ENCODE measurements at regions of chr13 and their contacts with region 1.

Region 1: GRCh38 chr13:52450012-52450792 is at the start of gene VPS36:
- DNase-seq: peak; percentile 96 to 98
- ATAC-seq: peak; percentile 86 to 97 (median 92)
- H3K4me3 ChIP-seq: peak within 1 kb of the TSS; percentile 62 to 88 (median 80)
- H3K27ac ChIP-seq: peak within 1 kb of the TSS; percentile 89 to 99 (median 97)
- H3K4me1 ChIP-seq: peaks cover 0 to 44% (median 26%) of the 10 kb centered on the region in 9 donors
- H3K27me3 ChIP-seq: no peaks in the 10 kb centered on the region
- CTCF ChIP-seq: peak; percentile 99 to 100 (median 100)
- total RNA-seq, gene VPS36: 25.3 to 36.5 (median 32.7) TPM

Region 2: GRCh38 chr13:51844862-51845573 is 605.2 kb before region 1 on chr13 and contains the start of gene TMEM272:
- intact Hi-C with region 1: no loop called
- DNase-seq: peak; percentile 31 to 61
- ATAC-seq: peak; percentile 54 to 87 (median 82)
- H3K4me3 ChIP-seq: peak within 1 kb of the TSS in 5 of 10 donors; percentile 2 to 29 (median 15)
- H3K27ac ChIP-seq: no peak within 1 kb of the TSS
- H3K4me1 ChIP-seq: peaks cover 0 to 22% (median 6%) of the 10 kb centered on the region in 9 donors
- H3K27me3 ChIP-seq: no peaks in the 10 kb centered on the region
- CTCF ChIP-seq: peak; percentile 70 to 95 (median 90)
- total RNA-seq, gene TMEM272: 0.32 to 2.7 (median 0.77) TPM

Region 3: GRCh38 chr13:52001120-52001731 is 449.0 kb before region 1 on chr13:
- intact Hi-C with region 1: loop called in 1 of 10 experiments (anchors 10 kb)
- DNase-seq: no peak
- ATAC-seq: peak in 5 of 8 donors; percentile 29 to 68 (median 52)
- H3K4me3 ChIP-seq: no peak overlapping the region
- H3K27ac ChIP-seq: no peak overlapping the region
- H3K4me1 ChIP-seq: peaks cover 2 to 18% (median 11%) of the 10 kb centered on the region in 9 donors
- H3K27me3 ChIP-seq: no peaks in the 10 kb centered on the region
- CTCF ChIP-seq: peak; percentile 50 to 80 (median 75)

Region 4: GRCh38 chr13:52194184-52194868 is 255.9 kb before region 1 on chr13:
- intact Hi-C with region 1: loop called in 2 of 10 experiments (anchors 10 kb)
- DNase-seq: peak; percentile 81 to 86
- ATAC-seq: peak; percentile 90 to 96 (median 94)
- H3K4me3 ChIP-seq: peak overlapping the region; percentile 34 to 92 (median 76)
- H3K27ac ChIP-seq: peak overlapping the region; percentile 41 to 93 (median 82)
- H3K4me1 ChIP-seq: peaks cover 0 to 30% (median 26%) of the 10 kb centered on the region in 9 donors
- H3K27me3 ChIP-seq: no peaks in the 10 kb centered on the region
- CTCF ChIP-seq: peak in 3 of 9 donors; percentile 26 to 32 (median 29)

Region 5: GRCh38 chr13:52348983-52349780 is 101.0 kb before region 1 on chr13:
- intact Hi-C with region 1: loop called in 6 of 10 experiments (anchors 5 to 10 kb)
- DNase-seq: no peak
- ATAC-seq: peak in 1 of 8 donors; percentile 47
- H3K4me3 ChIP-seq: no peak overlapping the region
- H3K27ac ChIP-seq: no peak overlapping the region
- H3K4me1 ChIP-seq: peaks cover 0 to 8% (median 0%) of the 10 kb centered on the region in 9 donors
- H3K27me3 ChIP-seq: no peaks in the 10 kb centered on the region
- CTCF ChIP-seq: no peak

Region 6: GRCh38 chr13:52405767-52406494 is 44.3 kb before region 1 on chr13 and contains the start of gene THSD1:
- intact Hi-C with region 1: loop called in 5 of 10 experiments (anchors 1 to 5 kb)
- DNase-seq: peak; percentile 83 to 86
- ATAC-seq: peak; percentile 92 to 97 (median 95)
- H3K4me3 ChIP-seq: peak within 1 kb of the TSS; percentile 43 to 82 (median 66)
- H3K27ac ChIP-seq: peak within 1 kb of the TSS; percentile 61 to 92 (median 77)
- H3K4me1 ChIP-seq: peaks cover 0 to 36% (median 13%) of the 10 kb centered on the region in 9 donors
- H3K27me3 ChIP-seq: peaks cover 0 to 19% (median 0%) of the 10 kb centered on the region in 7 donors
- CTCF ChIP-seq: no peak
- total RNA-seq, gene THSD1: 3.8 to 9.3 (median 6.8) TPM